Left colon (tissue), 2 donors: ENCODE measurements at regions of chr2 and their contacts with region 1.

Region 1: DNA sequence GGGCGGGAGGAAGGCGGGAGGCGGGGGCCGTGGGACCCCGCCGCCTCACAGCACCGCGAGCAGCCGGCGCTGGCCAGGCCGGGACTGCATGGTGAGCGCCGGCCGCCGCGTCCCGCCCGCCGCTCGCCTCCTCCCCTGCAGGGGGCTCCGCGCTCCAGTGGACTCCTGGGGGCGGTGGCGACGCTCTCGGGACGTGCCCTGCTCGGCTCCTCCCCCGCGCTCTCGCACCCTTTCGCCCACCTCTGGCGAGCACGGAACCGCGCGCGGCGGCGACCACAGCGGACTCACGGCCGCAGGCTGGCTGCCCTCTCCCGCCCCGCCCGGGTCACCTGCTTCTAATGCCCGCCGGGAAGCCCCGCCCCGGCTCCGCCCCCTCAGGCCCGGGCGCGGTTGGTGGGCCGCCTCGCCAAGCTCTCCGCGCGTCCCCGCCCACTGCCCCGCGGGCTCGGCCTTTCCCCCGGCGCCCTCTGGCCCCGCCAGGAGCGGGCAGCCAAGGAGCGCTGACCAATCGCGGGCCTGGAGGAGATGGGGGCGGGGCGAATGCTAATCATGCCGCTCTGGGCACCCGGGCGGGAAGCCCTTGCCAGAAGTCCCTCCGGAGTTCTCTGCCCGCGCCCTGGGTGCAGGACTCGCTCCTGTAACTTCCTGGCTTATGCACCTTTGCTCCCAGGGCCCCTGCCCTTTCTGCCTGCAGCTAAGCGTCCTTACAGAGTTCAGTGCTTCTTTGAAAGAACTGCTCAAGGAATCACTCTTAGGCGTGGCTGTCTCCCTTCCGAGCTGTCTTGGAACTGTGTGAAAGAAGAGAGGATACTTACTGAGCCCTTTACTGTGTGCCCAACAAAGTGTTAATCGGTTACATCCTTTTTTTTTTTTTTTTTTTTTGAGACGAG is at the start of gene FZD5:
- DNase-seq: peak; percentile 98 to 99
- ATAC-seq: peak; percentile 71
- total RNA-seq, gene FZD5: 109 to 147 TPM

Region 2: DNA sequence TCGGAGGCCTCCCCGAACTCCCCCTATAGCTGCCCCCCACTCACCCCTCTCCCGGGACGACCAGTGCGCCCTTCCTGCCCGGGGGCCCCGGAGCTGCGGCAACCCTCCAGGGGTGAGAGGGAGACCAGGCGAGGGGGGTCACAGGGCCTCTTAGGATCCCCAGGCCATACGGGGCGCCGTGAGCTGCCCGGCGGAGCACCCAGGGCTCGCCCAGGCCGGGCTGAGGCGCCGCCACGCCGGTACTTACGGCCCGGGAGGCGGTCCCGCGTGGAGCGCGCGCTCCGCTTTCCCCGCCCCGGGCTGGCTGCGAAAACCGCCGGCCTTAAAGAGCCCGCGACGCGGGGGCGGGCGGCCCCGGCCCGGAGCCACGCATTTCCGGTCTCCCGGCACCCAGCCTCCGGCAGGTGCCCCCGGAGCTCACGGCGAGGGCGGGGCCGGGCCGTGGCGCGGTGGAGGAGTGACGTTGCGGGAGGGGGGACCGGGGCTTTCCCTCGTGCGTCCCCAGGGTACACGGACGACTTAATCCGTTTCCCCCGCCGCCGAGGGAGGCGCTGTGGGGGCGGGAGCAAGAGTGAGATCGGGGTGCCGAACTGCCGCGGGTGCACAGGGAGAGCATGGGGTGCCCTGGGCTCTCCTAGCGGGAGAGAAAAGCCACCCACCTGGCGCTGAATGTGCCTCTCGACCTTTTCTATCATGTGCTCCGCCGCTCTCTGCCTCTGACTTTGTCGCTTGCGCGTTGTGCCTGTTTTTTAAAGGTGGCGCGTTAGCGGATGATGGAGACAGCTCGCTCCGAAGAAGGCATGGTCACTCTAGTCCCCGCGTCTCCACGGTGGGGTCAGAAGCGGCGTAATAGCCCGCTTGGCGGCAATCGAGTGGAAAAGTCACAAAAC is 144.6 kb before region 1 on chr2 and contains the start of gene METTL21A:
- intact Hi-C with region 1: no loop called
- DNase-seq: peak; percentile 92 to 93
- ATAC-seq: peak; percentile 85
- total RNA-seq, gene METTL21A: 16.3 to 16.5 TPM

Region 3: GRCh38 chr2:207847807-207848544 is 78.1 kb after region 1 on chr2:
- intact Hi-C with region 1: no loop called
- DNase-seq: peak; percentile 63 to 88
- ATAC-seq: peak; percentile 82

Region 4: DNA sequence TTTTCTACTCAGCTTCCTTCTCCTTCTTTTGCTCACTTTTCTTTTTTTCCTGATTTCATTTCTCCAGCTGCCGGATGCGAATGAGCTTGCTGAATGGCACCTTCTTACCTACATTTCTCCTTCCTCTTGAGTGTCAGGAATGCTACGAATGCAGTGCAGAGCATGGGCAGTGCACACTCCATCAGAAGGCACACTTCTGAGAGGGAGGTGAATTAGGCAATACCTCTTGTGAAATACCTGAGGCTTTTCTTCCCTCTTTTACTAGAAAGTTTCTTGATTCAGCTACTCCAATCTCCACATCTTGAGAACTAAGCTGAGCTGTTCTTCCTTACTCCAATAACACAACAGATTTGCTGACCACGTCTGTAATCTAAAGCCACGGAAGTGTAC is 204.4 kb after region 1 on chr2:
- intact Hi-C with region 1: loop called (anchors 5 to 10 kb)
- DNase-seq: no peak
- ATAC-seq: no peak